PC-3 (cell line): ENCODE measurements at regions of chr9 and their contacts with region 1.

Region 1: DNA sequence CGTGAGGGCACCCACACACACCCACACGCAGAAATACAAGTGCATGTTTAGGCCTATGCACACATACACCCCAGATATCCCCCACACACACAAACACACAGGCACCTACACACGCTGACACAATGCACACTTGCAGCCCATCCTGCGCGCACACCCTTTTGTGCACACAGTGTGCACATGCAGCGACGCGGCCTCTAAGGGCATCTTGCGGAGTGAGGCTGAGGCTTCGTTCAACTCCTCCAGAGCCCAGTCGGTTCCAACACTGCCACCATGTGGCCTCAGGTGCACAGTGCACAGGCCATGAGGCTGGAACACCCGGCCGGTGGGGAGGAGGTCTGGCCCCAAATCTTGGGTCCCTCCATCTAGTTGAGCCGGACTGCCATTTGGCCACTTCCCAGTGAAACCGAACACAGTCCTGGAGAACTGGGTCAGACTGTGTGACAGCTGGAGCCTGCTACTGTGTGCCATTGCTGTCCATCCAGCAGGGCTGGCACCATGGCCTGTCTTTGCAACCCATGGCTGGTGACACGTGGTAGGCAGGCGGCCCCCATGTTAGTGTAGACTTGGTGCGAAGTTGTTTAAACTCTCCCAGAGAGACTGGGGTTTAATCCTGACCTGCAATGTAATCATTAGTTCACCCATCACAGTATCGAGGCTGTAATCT is 97.7 kb upstream of the MVB12B start:
- DNase-seq: peak; percentile 72
- ATAC-seq: peak; percentile 96
- H3K4me3 ChIP-seq: no peak overlapping the region
- H3K27ac ChIP-seq: no peak overlapping the region
- H3K4me1 ChIP-seq: no peaks in the 10 kb centered on the region
- H3K27me3 ChIP-seq: no peaks in the 10 kb centered on the region
- CTCF ChIP-seq: peak; percentile 80

Region 2: GRCh38 chr9:125407974-125408900 is 820.7 kb before region 1 on chr9:
- CTCF ChIA-PET with region 1: no interaction called
- POLR2A ChIA-PET with region 1: no interaction called
- intact Hi-C with region 1: loop called (anchors 10 kb)
- DNase-seq: peak; percentile 72
- ATAC-seq: peak; percentile 82
- H3K4me3 ChIP-seq: peak overlapping the region; percentile 72
- H3K27ac ChIP-seq: no peak overlapping the region
- H3K4me1 ChIP-seq: peaks cover 8% of the 10 kb centered on the region
- H3K27me3 ChIP-seq: no peaks in the 10 kb centered on the region
- CTCF ChIP-seq: peak; percentile 74

Region 3: GRCh38 chr9:125558453-125559092 is 670.3 kb before region 1 on chr9:
- CTCF ChIA-PET with region 1: no interaction called
- POLR2A ChIA-PET with region 1: no interaction called
- intact Hi-C with region 1: loop called (anchors 10 kb)
- DNase-seq: peak; percentile 70
- ATAC-seq: peak; percentile 63
- H3K4me3 ChIP-seq: no peak overlapping the region
- H3K27ac ChIP-seq: no peak overlapping the region
- H3K4me1 ChIP-seq: no peaks in the 10 kb centered on the region
- H3K27me3 ChIP-seq: no peaks in the 10 kb centered on the region
- CTCF ChIP-seq: peak; percentile 78

Region 4: DNA sequence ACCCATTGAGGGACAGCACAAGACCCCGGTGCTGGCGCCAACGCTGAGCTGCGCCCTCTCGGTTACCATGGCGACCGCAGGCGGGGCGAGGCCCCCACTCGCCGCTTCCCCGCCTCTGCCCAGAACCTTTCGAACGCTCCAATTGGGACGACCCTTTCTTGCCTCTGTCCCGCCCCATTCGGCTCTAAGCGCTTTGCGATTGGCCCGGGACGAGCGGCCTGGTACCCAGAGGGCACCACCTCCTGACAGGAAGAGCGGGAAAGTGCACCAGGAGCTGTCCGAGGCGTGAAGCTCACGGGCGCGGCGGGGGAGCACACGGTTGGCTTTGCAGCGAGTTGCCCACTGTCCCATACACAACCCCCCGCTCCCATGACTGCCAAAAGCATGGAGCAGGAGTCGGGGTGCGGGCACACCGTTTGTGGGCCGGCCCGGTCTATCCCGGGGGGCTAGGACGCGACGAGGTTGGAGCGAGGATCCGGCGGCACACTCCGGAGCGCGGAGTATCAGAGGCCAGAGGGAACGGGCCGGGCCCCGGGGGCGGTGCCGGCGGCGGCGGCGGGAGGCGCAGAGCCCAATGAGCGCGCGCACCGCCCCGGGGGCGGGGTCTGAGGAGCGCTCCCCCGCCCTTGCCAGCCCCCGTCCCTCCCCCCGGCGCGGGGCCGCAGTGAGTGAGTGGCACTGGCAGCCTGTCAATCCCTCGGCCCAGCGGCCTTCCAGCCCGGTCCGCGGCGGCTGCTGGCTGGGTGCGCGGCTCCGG is 482.7 kb before region 1 on chr9:
- CTCF ChIA-PET with region 1: no interaction called
- POLR2A ChIA-PET with region 1: no interaction called
- intact Hi-C with region 1: loop called (anchors 5 kb)
- DNase-seq: peak; percentile 93
- ATAC-seq: peak; percentile 82
- H3K4me3 ChIP-seq: peak overlapping the region; percentile 61
- H3K27ac ChIP-seq: peak overlapping the region; percentile 39; the same call in 1 of the 2 replicates
- H3K4me1 ChIP-seq: peaks cover 31% of the 10 kb centered on the region
- H3K27me3 ChIP-seq: no peaks in the 10 kb centered on the region
- CTCF ChIP-seq: no peak

Region 5: DNA sequence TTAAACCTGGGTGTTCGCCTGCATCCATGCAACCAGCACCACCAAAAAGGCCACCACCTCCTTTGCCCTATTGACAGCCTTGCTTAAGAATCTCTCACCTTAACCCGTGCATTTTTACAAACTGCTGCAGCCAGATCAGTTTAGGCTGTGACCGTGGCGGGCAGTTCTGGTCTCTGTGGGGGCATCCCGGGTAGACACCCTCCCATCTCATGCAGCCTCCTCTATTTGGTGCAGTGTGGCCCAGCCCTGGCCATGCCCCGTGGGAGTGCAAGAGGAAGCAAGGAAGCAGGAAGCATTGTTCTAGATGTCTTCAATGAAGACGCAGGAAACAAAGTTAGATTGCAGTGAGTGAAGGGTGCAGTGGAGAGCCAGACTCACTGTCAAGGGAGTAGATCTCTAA is 11.1 kb before region 1 on chr9:
- CTCF ChIA-PET with region 1: no interaction called
- POLR2A ChIA-PET with region 1: no interaction called
- intact Hi-C with region 1: no loop called
- DNase-seq: no peak
- ATAC-seq: no peak
- H3K4me3 ChIP-seq: no peak overlapping the region
- H3K27ac ChIP-seq: no peak overlapping the region
- H3K4me1 ChIP-seq: no peaks in the 10 kb centered on the region
- H3K27me3 ChIP-seq: peaks cover 19% of the 10 kb centered on the region
- CTCF ChIP-seq: no peak